Ovary (tissue), 10 donors: ENCODE measurements at regions of chr12 and their contacts with region 1.

Region 1: GRCh38 chr12:97312570-97313135 is 150.0 kb upstream of the RMST start:
- DNase-seq: no peak
- H3K4me3 ChIP-seq: no peak overlapping the region
- H3K27ac ChIP-seq: no peak overlapping the region
- H3K4me1 ChIP-seq: no peaks in the 10 kb centered on the region
- H3K27me3 ChIP-seq: no peaks in the 10 kb centered on the region
- CTCF ChIP-seq: no peak
- EP300 ChIP-seq: no peak
- POLR2A ChIP-seq: no peak

Region 2: DNA sequence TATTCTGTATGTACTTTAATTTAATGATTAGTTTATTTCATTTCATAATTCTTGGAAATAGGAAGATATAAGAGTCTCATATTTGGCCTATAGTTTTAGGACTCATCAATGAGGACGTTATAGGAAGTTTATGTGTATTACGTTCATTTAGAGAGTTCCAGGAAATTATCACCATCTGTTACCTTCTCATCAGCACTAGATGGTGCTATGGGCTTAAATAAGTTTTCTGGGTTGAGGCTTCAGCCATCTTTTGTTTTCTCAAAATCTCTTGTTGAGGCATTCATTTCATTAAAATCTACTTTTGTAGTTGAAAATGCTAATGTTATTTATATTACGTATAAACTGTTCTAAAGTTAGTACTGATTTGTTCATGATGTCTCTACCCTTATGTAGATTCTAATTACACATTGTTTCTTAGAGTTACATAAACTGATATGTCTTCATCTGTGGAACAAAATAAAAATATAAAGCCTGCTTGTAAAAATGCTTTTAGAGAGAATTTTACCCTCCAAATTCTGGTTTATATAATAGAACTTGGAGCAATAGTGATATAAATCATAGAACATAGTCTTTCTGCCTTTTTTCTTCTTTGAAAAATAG is 734.0 kb before region 1 on chr12:
- intact Hi-C with region 1: loop called in 2 of 4 experiments (anchors 10 kb)
- DNase-seq: no peak
- H3K4me3 ChIP-seq: no peak overlapping the region
- H3K27ac ChIP-seq: no peak overlapping the region
- H3K4me1 ChIP-seq: no peaks in the 10 kb centered on the region
- H3K27me3 ChIP-seq: no peaks in the 10 kb centered on the region
- CTCF ChIP-seq: peak in 2 of 3 donors; percentile 34 to 42
- EP300 ChIP-seq: no peak
- POLR2A ChIP-seq: no peak

Region 3: DNA sequence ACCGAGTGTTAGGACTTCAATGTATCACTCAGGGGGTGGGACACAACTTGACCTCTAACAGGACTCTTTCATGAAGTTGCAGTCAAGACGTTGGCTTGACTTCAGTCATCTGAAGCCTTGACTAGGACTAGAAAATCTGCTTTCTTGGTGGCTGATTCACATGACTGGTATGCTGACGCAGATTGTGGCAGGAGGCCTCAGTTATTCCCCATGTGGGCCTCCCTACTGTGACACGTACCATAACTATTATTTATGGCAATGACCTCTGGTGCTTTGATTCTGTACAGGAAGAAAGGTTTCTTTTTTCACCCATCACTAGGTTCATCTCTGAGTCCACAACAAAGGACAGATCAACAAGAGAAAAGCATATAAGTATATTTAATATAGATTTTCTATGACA is 135.2 kb before region 1 on chr12:
- intact Hi-C with region 1: no loop called
- DNase-seq: no peak
- H3K4me3 ChIP-seq: no peak overlapping the region
- H3K27ac ChIP-seq: no peak overlapping the region
- H3K4me1 ChIP-seq: no peaks in the 10 kb centered on the region
- H3K27me3 ChIP-seq: no peaks in the 10 kb centered on the region
- CTCF ChIP-seq: no peak
- EP300 ChIP-seq: no peak
- POLR2A ChIP-seq: no peak